Psoas muscle (tissue), 8 donors: ENCODE measurements at regions of chr3 and their contacts with region 1.

Region 1: DNA sequence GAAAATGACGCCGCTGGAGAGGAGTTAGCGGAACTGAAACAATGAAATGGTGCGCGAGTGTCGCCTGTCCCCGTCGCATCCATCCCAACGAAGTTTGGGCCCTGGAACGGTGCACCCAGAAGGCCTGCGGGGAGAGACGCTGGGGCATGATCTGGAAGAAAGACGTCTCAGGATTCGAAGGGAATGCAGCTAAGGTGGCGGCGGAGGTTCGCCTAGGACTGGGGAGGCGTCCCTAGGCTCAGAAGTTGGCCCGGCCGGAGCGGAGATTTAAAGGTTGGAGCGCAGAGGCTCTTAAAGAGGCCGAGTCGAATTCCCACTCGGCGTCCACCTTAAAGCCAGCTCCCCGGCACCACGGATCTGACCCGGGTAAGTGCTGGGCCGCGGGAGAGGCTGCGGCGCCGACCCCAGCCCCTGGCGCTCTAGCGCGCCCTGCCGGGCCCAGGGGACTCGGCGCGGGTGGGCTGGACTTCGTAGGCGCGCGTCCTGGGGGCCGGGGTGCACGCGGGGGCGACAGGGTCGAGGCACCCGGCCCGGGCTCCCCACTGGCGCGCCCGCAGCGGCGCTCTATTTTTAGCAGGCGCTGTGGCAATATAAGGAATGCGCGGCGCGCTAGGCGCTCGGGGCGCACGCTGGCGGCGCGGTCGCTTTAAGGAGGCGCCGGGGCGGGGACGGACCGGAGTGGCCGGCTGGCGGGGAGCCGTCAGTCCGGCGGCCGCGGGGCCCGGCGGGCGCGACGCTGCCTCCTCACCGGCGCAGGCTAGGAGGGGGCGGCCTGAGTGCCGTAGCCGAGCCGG is at the start of gene MRAS:
- DNase-seq: peak; percentile 88 to 92
- ATAC-seq: peak; percentile 78 to 89 (median 83)
- H3K4me3 ChIP-seq: peak within 1 kb of the TSS; percentile 81
- H3K27ac ChIP-seq: peak within 1 kb of the TSS; percentile 98
- H3K4me1 ChIP-seq: peaks cover 25% of the 10 kb centered on the region
- H3K27me3 ChIP-seq: no peaks in the 10 kb centered on the region
- CTCF ChIP-seq: peak; percentile 38
- total RNA-seq, gene MRAS: 107 to 166 (median 123) TPM

Region 2: GRCh38 chr3:138389841-138390586 is 41.9 kb after region 1 on chr3:
- intact Hi-C with region 1: loop called (anchors 5 kb)
- DNase-seq: peak; percentile 53 to 67
- ATAC-seq: peak; percentile 93 to 98 (median 95)
- H3K4me3 ChIP-seq: peak overlapping the region; percentile 19
- H3K27ac ChIP-seq: peak overlapping the region; percentile 72
- H3K4me1 ChIP-seq: peaks cover 40% of the 10 kb centered on the region
- H3K27me3 ChIP-seq: no peaks in the 10 kb centered on the region
- CTCF ChIP-seq: no peak